Transverse colon (tissue), 4 donors: ENCODE measurements at regions of chr2 and their contacts with region 1.

Region 1: GRCh38 chr2:44731505-44731904 is 210.0 kb upstream of the SIX3 start:
- DNase-seq: no peak
- H3K4me3 ChIP-seq: no peak overlapping the region
- H3K27ac ChIP-seq: no peak overlapping the region
- H3K4me1 ChIP-seq: peaks cover 0 to 13% (median 3%) of the 10 kb centered on the region in 4 donors
- H3K27me3 ChIP-seq: no peaks in the 10 kb centered on the region
- CTCF ChIP-seq: no peak
- EP300 ChIP-seq: no peak
- POLR2A ChIP-seq: no peak

Region 2: GRCh38 chr2:44686561-44686960 is 44.9 kb before region 1 on chr2:
- in situ Hi-C with region 1: no loop called
- intact Hi-C with region 1: loop called (anchors 2 kb)
- DNase-seq: no peak
- H3K4me3 ChIP-seq: no peak overlapping the region
- H3K27ac ChIP-seq: no peak overlapping the region
- H3K4me1 ChIP-seq: no peaks in the 10 kb centered on the region
- H3K27me3 ChIP-seq: no peaks in the 10 kb centered on the region
- CTCF ChIP-seq: no peak
- EP300 ChIP-seq: no peak
- POLR2A ChIP-seq: no peak

Region 3: DNA sequence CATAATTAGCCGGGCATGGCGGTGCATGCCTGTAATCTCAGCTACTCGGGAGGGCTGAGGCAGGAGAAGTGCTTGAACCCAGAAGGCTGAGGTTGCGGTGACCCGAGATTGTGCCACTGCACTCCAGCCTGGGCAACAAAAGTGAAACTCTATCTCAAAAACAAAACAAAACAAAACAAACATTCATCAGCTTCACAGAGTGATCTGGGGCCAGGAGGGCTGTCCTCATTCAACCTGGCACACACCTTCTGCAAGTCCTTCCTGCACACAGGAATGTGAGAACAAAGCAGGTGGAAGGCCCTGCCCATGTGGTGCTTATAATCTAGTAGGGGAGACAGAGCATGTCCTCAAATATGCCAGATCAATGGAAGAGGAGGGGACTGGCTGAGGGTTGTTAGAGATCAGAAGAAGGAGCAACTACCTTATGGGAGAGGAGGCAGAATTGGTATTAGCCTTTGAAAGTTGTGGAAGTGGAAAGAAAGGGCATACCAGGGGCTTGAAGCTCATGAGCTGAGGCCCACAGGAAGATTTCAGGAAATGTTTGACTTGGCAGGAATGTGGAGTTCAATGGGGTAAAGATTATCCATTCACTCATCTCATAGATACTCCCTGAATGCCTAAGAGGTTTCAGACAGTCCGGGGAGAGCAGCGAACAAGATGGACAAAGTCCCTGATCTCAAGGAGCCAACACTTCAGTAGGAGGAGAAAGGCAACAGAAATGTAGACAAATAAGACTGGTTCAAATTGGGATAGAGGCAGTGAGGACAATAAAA is 54.7 kb after region 1 on chr2:
- in situ Hi-C with region 1: no loop called
- intact Hi-C with region 1: no loop called
- DNase-seq: no peak
- H3K4me3 ChIP-seq: no peak overlapping the region
- H3K27ac ChIP-seq: no peak overlapping the region
- H3K4me1 ChIP-seq: no peaks in the 10 kb centered on the region
- H3K27me3 ChIP-seq: peaks cover under 1% of the 10 kb centered on the region
- CTCF ChIP-seq: no peak
- EP300 ChIP-seq: no peak
- POLR2A ChIP-seq: no peak

Region 4: GRCh38 chr2:44817673-44818335 is 86.3 kb after region 1 on chr2:
- in situ Hi-C with region 1: no loop called
- intact Hi-C with region 1: no loop called
- DNase-seq: no peak
- H3K4me3 ChIP-seq: no peak overlapping the region
- H3K27ac ChIP-seq: peak overlapping the region in 1 of 4 donors; percentile 30
- H3K4me1 ChIP-seq: peaks cover 0 to 5% (median 0%) of the 10 kb centered on the region in 4 donors
- H3K27me3 ChIP-seq: no peaks in the 10 kb centered on the region
- CTCF ChIP-seq: no peak
- EP300 ChIP-seq: no peak
- POLR2A ChIP-seq: no peak

Region 5: GRCh38 chr2:44886414-44886813 is 154.9 kb after region 1 on chr2:
- in situ Hi-C with region 1: no loop called
- intact Hi-C with region 1: no loop called
- DNase-seq: no peak
- H3K4me3 ChIP-seq: no peak overlapping the region
- H3K27ac ChIP-seq: no peak overlapping the region
- H3K4me1 ChIP-seq: no peaks in the 10 kb centered on the region
- H3K27me3 ChIP-seq: peaks cover 30% of the 10 kb centered on the region
- CTCF ChIP-seq: no peak
- EP300 ChIP-seq: no peak
- POLR2A ChIP-seq: no peak